MCF 10A (cell line): ENCODE measurements at regions of chr4 and their contacts with region 1.

Region 1: GRCh38 chr4:15906024-15906443 is 32.5 kb downstream of the FGFBP1 start:
- DNase-seq: peak; percentile 99
- H3K4me3 Mint-ChIP-seq: peak overlapping the region; percentile 52
- H3K27ac Mint-ChIP-seq: peak overlapping the region; percentile 33
- H3K4me1 Mint-ChIP-seq: peaks cover 7% of the 10 kb centered on the region
- H3K27me3 Mint-ChIP-seq: no peaks in the 10 kb centered on the region
- CTCF ChIP-seq: no peak

Region 2: DNA sequence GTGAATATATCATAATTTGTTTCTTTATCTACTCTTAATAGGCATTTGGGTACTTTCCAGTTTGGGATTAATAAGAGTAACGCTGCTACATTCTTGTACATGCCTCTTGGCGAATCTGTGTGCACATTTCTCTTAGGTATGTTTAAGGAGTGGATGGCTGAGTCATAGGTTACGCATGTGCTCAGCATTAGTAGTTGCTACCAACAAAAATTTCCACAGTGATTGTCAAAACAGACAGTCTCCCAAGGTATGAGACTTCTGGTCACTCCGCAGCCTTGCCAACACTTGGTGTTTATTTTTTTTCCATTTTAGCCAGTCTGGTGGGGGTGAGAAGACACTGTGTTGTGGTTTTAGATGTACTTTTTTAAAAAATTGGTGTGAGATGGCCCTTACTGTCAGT is 12.1 kb before region 1 on chr4:
- CTCF ChIA-PET with region 1: interaction called, 6 read pairs
- POLR2A ChIA-PET with region 1: interaction called, 14 read pairs
- intact Hi-C with region 1: loop called (anchors 1 kb)
- DNase-seq: peak; percentile 97
- H3K4me3 Mint-ChIP-seq: no peak overlapping the region
- H3K27ac Mint-ChIP-seq: peak overlapping the region; percentile 99
- H3K4me1 Mint-ChIP-seq: peaks cover 29% of the 10 kb centered on the region
- H3K27me3 Mint-ChIP-seq: no peaks in the 10 kb centered on the region
- CTCF ChIP-seq: no peak

Region 3: GRCh38 chr4:16023776-16024408 is 117.9 kb after region 1 on chr4:
- CTCF ChIA-PET with region 1: no interaction called
- POLR2A ChIA-PET with region 1: no interaction called
- intact Hi-C with region 1: no loop called
- DNase-seq: peak; percentile 37
- H3K4me3 Mint-ChIP-seq: no peak overlapping the region
- H3K27ac Mint-ChIP-seq: no peak overlapping the region
- H3K4me1 Mint-ChIP-seq: peaks cover 6% of the 10 kb centered on the region
- H3K27me3 Mint-ChIP-seq: peaks cover 18% of the 10 kb centered on the region
- CTCF ChIP-seq: no peak